ENCODE measurements at regions of chr16 and their contacts with region 1.

Region 1: GRCh38 chr16:18932243-18932981 is 6.2 kb upstream of the SMG1 start:
- DNase-seq: peak; percentile 35
- H3K4me3 ChIP-seq: no peak overlapping the region
- H3K27ac ChIP-seq: no peak overlapping the region
- H3K4me1 ChIP-seq: peaks cover 3% of the 10 kb centered on the region
- H3K27me3 ChIP-seq: no peaks in the 10 kb centered on the region
- CTCF ChIP-seq: no peak

Region 2: GRCh38 chr16:18801197-18801972 is 131.0 kb before region 1 on chr16 and contains the start of gene ARL6IP1:
- CTCF ChIA-PET with region 1: no interaction called
- dilution Hi-C with region 1: no loop called
- in situ Hi-C with region 1: no loop called
- intact Hi-C with region 1: loop called (anchors 5 kb)
- DNase-seq: peak; percentile 99
- H3K4me3 ChIP-seq: peak within 1 kb of the TSS; percentile 83 to 97 (median 95)
- H3K27ac ChIP-seq: peak within 1 kb of the TSS; percentile 85
- H3K4me1 ChIP-seq: peaks cover 42% of the 10 kb centered on the region
- H3K27me3 ChIP-seq: no peaks in the 10 kb centered on the region
- CTCF ChIP-seq: peak; percentile 62 to 94
- total RNA-seq, gene ARL6IP1: 88.7 to 236 TPM

Region 3: DNA sequence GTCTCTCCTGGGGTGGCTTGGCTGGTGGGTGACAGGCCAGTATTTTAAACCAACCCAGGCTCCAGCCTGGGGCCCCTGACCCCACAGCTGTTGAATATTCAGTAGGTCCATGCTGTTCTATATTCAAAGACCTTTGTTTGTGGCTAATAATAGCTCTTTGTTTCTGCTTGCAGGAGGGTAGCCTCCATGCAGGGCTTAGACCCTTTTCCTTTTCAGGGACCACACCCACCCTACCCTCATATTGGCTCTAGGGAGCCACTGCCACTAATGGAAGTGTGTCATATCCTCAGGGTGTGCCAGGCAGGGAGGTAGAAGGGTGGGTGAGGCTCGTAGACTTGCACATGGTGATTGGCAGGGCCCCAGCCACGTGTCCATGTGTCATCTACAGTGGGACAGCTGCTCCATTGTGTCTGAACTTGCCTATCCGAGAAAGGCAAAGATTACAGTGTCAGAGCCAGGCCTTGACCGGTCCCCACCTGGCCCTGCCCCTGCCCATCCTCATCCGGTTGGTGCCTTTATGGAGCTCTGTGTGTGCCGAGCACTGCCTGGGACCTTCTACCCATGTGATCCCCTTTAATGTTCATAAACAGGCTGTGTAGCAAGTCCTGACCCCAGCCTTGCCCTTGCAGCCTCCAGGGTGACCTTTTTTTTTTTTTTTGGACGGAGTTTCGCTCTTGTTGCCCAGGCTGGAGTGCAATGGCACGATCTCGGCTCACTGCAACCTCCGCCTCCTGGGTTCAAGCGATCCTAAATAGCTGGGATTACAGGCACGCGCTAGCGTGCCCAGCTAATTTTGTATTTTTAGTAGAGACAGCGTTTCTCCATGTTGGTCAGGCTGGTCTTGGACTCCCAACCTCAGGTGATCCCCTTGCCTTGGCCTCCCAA is 73.4 kb after region 1 on chr16:
- CTCF ChIA-PET with region 1: no interaction called
- dilution Hi-C with region 1: loop called (anchors 5 kb)
- in situ Hi-C with region 1: no loop called
- intact Hi-C with region 1: no loop called
- DNase-seq: peak; percentile 99
- H3K4me3 ChIP-seq: no peak overlapping the region
- H3K27ac ChIP-seq: peak overlapping the region; percentile 97
- H3K4me1 ChIP-seq: peaks cover 64% of the 10 kb centered on the region
- H3K27me3 ChIP-seq: no peaks in the 10 kb centered on the region
- CTCF ChIP-seq: no peak

Region 4: GRCh38 chr16:19366391-19366790 is 434.0 kb after region 1 on chr16:
- CTCF ChIA-PET with region 1: no interaction called
- dilution Hi-C with region 1: no loop called
- in situ Hi-C with region 1: no loop called
- intact Hi-C with region 1: no loop called
- DNase-seq: no peak
- H3K4me3 ChIP-seq: no peak overlapping the region
- H3K27ac ChIP-seq: no peak overlapping the region
- H3K4me1 ChIP-seq: no peaks in the 10 kb centered on the region
- H3K27me3 ChIP-seq: peaks cover 3% of the 10 kb centered on the region
- CTCF ChIP-seq: no peak

Measured in mammary epithelial cell (primary cell).